Esophagus squamous epithelium (tissue), 5 donors: ENCODE measurements at regions of chr6 and their contacts with region 1.

Region 1: GRCh38 chr6:71509191-71510005 is 220.8 kb downstream of the OGFRL1 start:
- DNase-seq: no peak
- H3K4me3 ChIP-seq: no peak overlapping the region
- H3K27ac ChIP-seq: peak overlapping the region in 3 of 4 donors; percentile 20 to 45 (median 43)
- H3K4me1 ChIP-seq: peaks cover 0 to 10% (median 3%) of the 10 kb centered on the region in 3 donors
- H3K27me3 ChIP-seq: no peaks in the 10 kb centered on the region
- CTCF ChIP-seq: no peak
- POLR2A ChIP-seq: no peak

Region 2: DNA sequence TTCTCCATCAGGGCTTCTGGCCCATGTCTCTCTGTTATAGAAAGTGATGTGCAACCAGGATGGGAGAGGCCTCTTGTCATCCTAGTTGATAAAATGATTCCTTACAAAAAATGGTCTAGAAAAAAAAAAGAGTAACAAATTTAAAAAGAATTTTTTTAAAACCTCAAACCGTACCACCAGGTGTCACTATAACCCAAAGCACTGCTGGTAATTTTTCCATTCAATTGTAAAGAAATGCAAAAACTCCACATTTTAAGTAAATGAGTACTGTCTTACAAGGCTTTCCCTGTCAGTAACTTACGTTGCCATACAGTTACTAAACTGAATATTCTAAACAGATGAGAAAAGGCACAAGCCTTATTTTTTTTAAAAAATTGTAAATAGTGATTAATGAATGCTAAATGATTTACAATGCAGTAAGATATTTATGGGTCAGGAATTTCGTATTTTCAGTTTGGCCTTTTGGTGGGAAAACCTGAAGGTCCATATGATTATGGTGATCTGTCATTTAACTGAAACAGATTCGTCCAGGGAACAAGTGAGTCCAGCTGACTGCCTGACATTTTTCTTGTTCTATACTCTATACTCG is 125.4 kb before region 1 on chr6:
- intact Hi-C with region 1: loop called (anchors 5 kb)
- DNase-seq: no peak
- H3K4me3 ChIP-seq: no peak overlapping the region
- H3K27ac ChIP-seq: no peak overlapping the region
- H3K4me1 ChIP-seq: peaks cover 0 to 22% (median 0%) of the 10 kb centered on the region in 3 donors
- H3K27me3 ChIP-seq: no peaks in the 10 kb centered on the region
- CTCF ChIP-seq: peak in 5 of 6 experiments; percentile 35 to 64 (median 53)
- POLR2A ChIP-seq: no peak